MCF 10A (cell line): ENCODE measurements at regions of chr14 and their contacts with region 1.

Region 1: GRCh38 chr14:78598041-78598920 is 428.1 kb downstream of the NRXN3 start:
- DNase-seq: peak; percentile 52
- H3K4me3 Mint-ChIP-seq: no peak overlapping the region
- H3K27ac Mint-ChIP-seq: no peak overlapping the region
- H3K4me1 Mint-ChIP-seq: no peaks in the 10 kb centered on the region
- H3K27me3 Mint-ChIP-seq: peaks cover 38% of the 10 kb centered on the region
- CTCF ChIP-seq: peak; percentile 91

Region 2: GRCh38 chr14:77654001-77654441 is 944.3 kb before region 1 on chr14:
- CTCF ChIA-PET with region 1: interaction called, 3 read pairs
- POLR2A ChIA-PET with region 1: no interaction called
- intact Hi-C with region 1: loop called (anchors 2 kb)
- DNase-seq: no peak
- H3K4me3 Mint-ChIP-seq: no peak overlapping the region
- H3K27ac Mint-ChIP-seq: no peak overlapping the region
- H3K4me1 Mint-ChIP-seq: no peaks in the 10 kb centered on the region
- H3K27me3 Mint-ChIP-seq: no peaks in the 10 kb centered on the region
- CTCF ChIP-seq: no peak

Region 3: GRCh38 chr14:78022059-78022458 is 576.2 kb before region 1 on chr14:
- CTCF ChIA-PET with region 1: interaction called, 3 read pairs
- POLR2A ChIA-PET with region 1: no interaction called
- intact Hi-C with region 1: loop called (anchors 2 kb)
- DNase-seq: peak; percentile 80
- H3K4me3 Mint-ChIP-seq: no peak overlapping the region
- H3K27ac Mint-ChIP-seq: no peak overlapping the region
- H3K4me1 Mint-ChIP-seq: no peaks in the 10 kb centered on the region
- H3K27me3 Mint-ChIP-seq: peaks cover 9% of the 10 kb centered on the region
- CTCF ChIP-seq: peak; percentile 73

Region 4: DNA sequence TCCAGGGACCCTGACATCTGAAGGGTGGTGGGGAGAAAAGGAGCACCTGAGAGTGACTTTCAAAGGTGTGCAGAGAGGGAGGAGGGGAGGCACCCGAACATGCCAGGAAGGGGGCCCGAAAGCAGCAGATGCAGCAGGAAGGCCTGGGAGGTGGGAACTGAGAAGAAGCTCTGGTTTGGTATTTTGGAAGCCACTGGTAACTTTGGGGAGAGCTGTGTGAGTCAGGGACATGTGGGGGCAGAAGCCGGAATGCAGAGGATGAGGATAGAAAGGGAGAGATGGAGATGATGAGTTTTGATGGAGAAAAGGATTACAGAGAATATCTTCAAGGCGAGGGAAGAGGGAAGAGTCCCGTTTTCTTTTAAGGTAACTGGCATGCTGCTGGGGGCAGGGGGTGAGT is 378.0 kb before region 1 on chr14:
- CTCF ChIA-PET with region 1: no interaction called
- POLR2A ChIA-PET with region 1: no interaction called
- intact Hi-C with region 1: no loop called
- DNase-seq: no peak
- H3K4me3 Mint-ChIP-seq: no peak overlapping the region
- H3K27ac Mint-ChIP-seq: no peak overlapping the region
- H3K4me1 Mint-ChIP-seq: no peaks in the 10 kb centered on the region
- H3K27me3 Mint-ChIP-seq: no peaks in the 10 kb centered on the region
- CTCF ChIP-seq: no peak

Region 5: DNA sequence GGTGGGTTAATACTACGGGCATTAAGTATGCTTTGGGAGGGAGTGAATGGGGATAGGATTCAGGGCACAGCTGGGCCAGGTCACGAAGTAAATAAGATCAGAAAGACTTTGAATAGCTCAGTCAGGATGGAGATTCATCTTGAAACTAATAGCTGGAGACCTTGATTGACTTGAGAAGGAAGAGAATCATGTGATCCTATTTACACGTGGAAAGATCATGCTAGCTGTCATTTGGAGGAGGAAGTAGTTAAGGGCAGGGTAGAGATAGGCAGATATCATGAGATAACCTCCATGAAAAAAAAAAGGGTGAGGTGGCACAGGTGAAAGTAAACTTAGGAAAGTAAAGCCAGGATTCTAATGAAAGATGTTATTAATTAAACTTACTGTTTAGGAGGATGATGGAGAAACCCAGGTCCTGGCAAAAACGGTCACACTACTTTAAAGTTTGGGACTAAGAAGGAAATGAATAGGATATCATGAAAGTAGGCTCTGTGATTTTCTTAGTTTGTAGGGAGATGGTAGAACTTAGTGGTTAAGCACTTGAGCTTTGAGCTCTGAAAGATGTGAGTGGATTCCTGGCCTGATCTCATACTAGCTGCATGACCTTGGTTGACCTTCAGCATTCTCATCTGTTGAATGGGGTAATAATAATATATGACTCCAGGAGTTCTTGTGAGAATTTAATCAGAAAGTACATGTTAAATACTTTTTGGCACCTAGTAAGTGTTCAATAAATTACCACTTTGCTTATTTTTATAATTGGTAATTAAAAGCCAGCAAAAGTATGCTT is 10.9 kb after region 1 on chr14:
- CTCF ChIA-PET with region 1: interaction called, 11 read pairs
- POLR2A ChIA-PET with region 1: no interaction called
- intact Hi-C with region 1: no loop called
- DNase-seq: no peak
- H3K4me3 Mint-ChIP-seq: no peak overlapping the region
- H3K27ac Mint-ChIP-seq: no peak overlapping the region
- H3K4me1 Mint-ChIP-seq: peaks cover 11% of the 10 kb centered on the region
- H3K27me3 Mint-ChIP-seq: no peaks in the 10 kb centered on the region
- CTCF ChIP-seq: no peak

Region 6: DNA sequence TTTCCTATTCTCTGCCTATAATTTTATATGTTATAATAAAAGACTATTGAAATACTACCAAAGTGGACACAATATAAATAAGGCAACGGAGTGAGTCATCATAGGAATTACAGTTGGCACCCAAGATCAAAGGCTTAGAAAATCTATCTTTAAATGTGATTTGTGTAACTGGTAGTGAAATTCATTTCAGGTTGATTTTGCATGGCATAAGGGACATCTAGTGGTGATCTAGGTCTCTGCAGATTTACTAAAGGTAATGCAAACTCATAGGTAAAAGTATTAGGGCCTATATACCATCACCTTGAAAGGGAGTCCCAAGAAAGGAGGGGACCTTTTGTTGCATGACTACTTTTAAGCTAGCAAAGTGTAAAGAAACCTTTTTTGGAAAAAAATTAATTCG is 99.1 kb after region 1 on chr14:
- CTCF ChIA-PET with region 1: interaction called, 13 read pairs
- POLR2A ChIA-PET with region 1: no interaction called
- intact Hi-C with region 1: loop called (anchors 1 kb)
- DNase-seq: peak; percentile 33
- H3K4me3 Mint-ChIP-seq: no peak overlapping the region
- H3K27ac Mint-ChIP-seq: no peak overlapping the region
- H3K4me1 Mint-ChIP-seq: no peaks in the 10 kb centered on the region
- H3K27me3 Mint-ChIP-seq: peaks cover 69% of the 10 kb centered on the region
- CTCF ChIP-seq: peak; percentile 69